ENCODE measurements at regions of chr3 and their contacts with region 1.

Region 1: DNA sequence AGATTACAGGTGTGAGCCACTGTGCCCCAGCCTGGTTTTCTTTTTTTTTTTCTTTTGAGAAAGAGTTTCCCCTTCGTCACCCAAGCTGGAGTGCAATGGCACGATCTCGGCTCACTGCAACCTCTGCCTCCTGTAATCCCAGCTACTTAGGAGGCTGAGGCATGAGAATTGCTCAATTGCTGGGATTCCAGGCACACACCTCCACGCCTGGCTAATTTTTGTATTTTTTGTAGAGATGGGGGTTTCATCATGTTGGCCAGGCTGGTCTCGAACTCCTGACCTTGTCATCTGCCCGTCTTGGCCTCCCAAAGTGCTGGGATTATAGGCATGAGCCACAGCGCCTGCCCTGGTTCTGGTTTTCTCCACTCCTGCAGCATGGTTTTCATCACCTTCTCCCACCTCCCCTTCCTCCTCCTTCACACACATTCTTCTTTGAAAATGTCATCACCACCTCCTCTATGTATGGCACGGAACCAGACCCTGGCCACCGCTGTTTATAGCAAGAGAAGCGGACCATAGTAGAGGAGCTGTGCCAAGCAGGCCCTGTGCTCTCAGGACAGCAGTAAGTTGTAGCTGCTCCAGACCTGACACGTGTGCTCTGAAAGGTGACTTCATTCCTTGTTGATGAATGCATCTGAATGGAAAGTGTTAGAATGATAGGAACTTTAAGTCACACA is 14.6 kb upstream of the AHSG start:
- DNase-seq: no peak
- ATAC-seq: no peak
- H3K4me3 ChIP-seq: no peak overlapping the region
- H3K27ac ChIP-seq: no peak overlapping the region
- H3K4me1 ChIP-seq: no peaks in the 10 kb centered on the region
- H3K27me3 ChIP-seq: no peaks in the 10 kb centered on the region
- CTCF ChIP-seq: no peak
- POLR2A ChIP-seq: no peak
- RAD21 ChIP-seq: no peak

Region 2: GRCh38 chr3:186609247-186609868 is 11.1 kb after region 1 on chr3:
- CTCF ChIA-PET with region 1: interaction called, 14 read pairs
- POLR2A ChIA-PET with region 1: interaction called, 3 read pairs
- RAD21 ChIA-PET with region 1: no interaction called
- intact Hi-C with region 1: no loop called
- DNase-seq: peak; percentile 41
- ATAC-seq: peak; percentile 97
- H3K4me3 ChIP-seq: no peak overlapping the region
- H3K27ac ChIP-seq: no peak overlapping the region
- H3K4me1 ChIP-seq: peaks cover 0 to 1% of the 10 kb centered on the region in 2 experiments; a peak in 1 of 4 replicates
- H3K27me3 ChIP-seq: no peaks in the 10 kb centered on the region
- CTCF ChIP-seq: peak; percentile 47 to 55 (median 50); a peak in 5 of 6 replicates
- POLR2A ChIP-seq: no peak
- RAD21 ChIP-seq: peak; percentile 68